ENCODE measurements at regions of chr19 and their contacts with region 1.

Region 1: DNA sequence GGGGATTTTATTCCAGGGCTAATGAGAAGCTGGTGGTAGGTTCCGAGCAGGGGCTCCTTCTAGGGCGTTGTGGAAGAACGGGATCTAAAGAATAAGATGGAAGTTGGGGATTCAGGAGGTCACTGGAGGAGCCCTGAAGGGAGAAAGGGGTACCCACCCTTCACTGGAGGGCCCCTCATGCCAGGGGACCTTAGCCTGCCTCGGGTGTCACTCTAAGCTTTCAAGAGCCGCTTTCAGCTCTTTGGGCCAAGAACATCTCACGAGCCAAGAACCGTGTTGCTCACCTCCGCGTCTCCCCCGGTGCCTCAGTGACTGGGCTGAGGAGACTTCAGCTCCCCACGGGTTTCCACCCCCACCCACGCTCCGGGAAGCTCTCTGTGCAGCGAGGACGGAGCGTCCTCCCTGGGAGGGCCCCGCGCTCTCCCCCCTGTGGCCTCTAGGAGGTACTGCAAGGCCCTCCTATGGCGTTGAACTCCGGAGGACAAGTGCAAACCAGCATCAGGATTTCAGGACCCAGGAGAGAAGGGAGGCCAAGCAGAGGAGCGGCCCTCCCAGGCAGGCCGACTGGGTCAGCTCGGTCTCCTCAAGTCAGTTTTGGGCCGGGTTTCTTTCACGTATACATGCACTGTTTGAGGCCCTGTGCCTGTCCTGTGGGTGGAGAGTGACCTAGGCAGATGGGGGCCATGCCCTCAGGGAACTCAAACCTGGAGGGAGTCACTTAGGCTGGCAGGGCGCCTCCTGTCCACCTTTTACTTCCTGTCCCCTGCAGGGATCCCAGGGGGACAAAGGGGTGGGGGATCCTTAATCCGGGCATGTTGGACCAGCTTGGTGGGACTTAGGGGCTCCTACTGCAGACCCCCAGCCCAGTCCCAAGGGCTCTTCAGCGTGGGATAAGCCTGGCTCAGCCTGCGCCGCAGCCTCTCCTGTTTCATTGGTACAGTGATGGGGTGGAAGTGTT is 5.1 kb upstream of the KRTDAP start:
- DNase-seq: peak; percentile 72
- ATAC-seq: peak; percentile 91
- H3K4me3 Mint-ChIP-seq: no peak overlapping the region
- H3K27ac Mint-ChIP-seq: no peak overlapping the region
- H3K4me1 Mint-ChIP-seq: peaks cover 3% of the 10 kb centered on the region
- H3K27me3 Mint-ChIP-seq: peaks cover 19% of the 10 kb centered on the region

Region 2: DNA sequence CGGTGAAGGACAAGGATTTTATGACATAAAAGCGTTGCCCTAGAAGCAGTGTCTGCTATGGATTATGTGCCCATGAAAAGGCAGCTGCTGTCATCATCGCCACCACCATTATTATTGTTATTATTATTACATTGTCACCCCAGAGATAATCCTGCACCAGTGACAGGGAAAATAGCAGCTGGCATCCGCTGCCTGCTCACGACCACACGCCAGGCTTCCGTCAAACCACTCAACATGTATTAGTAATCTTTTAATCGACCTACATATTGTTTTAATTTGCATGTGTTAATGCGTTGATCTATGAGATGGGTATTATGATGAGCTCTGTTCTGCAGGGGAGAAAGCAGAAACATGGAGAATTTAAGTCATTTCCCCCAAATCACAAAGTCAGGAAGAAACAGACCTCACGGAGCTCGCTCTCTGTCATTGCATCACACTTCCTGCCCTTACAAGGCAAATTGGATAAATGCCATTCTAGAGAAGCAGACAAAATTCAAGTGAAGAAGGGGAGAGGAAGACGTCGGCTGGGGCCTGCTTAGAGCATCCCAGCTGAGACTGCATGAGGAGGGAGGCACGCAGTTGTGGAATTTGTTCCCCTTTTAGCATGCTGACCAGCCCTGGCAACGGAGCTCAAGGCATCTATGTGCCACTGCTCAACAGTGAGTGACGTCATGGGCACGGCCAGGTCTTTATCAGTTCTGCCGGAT is 137.4 kb before region 1 on chr19 and contains the start of gene FFAR3:
- CTCF ChIA-PET with region 1: interaction called, 51 read pairs
- DNase-seq: peak; percentile 22
- ATAC-seq: no peak
- H3K4me3 Mint-ChIP-seq: no peak within 1 kb of the TSS
- H3K27ac Mint-ChIP-seq: no peak within 1 kb of the TSS
- H3K4me1 Mint-ChIP-seq: peaks cover 19% of the 10 kb centered on the region
- H3K27me3 Mint-ChIP-seq: peaks cover 35% of the 10 kb centered on the region
- total RNA-seq, gene FFAR3: not detected

Region 3: DNA sequence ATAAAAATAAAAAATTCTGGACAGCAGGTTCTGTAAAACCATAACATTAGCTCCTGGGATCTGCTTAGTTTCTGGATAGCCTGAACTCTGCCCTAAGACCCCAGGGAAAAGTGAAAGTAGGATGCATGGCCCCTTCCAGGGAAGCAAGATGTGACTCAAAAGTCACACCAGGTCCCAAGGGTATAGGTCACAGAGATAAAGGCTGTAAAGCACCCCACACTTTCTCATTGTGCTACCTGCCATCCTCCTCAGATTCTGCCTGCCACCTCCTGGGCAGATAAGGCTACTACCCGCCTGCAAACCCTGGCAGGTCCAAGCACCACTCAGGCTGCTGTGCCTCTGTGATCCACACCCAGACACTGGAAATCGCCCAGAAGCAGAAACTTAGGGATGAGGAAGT is 26.7 kb before region 1 on chr19:
- CTCF ChIA-PET with region 1: interaction called, 14 read pairs
- DNase-seq: peak; percentile 81
- ATAC-seq: peak; percentile 99
- H3K4me3 Mint-ChIP-seq: no peak overlapping the region
- H3K27ac Mint-ChIP-seq: no peak overlapping the region
- H3K4me1 Mint-ChIP-seq: peaks cover 7% of the 10 kb centered on the region
- H3K27me3 Mint-ChIP-seq: peaks cover 3% of the 10 kb centered on the region

Region 4: GRCh38 chr19:35509861-35510625 is 14.7 kb after region 1 on chr19:
- CTCF ChIA-PET with region 1: interaction called, 34 read pairs
- DNase-seq: peak; percentile 75
- ATAC-seq: peak; percentile 78
- H3K4me3 Mint-ChIP-seq: peak overlapping the region; percentile 22
- H3K27ac Mint-ChIP-seq: no peak overlapping the region
- H3K4me1 Mint-ChIP-seq: peaks cover 14% of the 10 kb centered on the region
- H3K27me3 Mint-ChIP-seq: peaks cover 59% of the 10 kb centered on the region

Region 5: GRCh38 chr19:35565016-35565856 is 69.8 kb after region 1 on chr19:
- CTCF ChIA-PET with region 1: no interaction called
- DNase-seq: no peak
- ATAC-seq: no peak
- H3K4me3 Mint-ChIP-seq: no peak overlapping the region
- H3K27ac Mint-ChIP-seq: no peak overlapping the region
- H3K4me1 Mint-ChIP-seq: no peaks in the 10 kb centered on the region
- H3K27me3 Mint-ChIP-seq: peaks cover 14% of the 10 kb centered on the region

Region 6: GRCh38 chr19:35592226-35592625 is 96.8 kb after region 1 on chr19:
- CTCF ChIA-PET with region 1: no interaction called
- DNase-seq: no peak
- ATAC-seq: no peak
- H3K4me3 Mint-ChIP-seq: no peak overlapping the region
- H3K27ac Mint-ChIP-seq: no peak overlapping the region
- H3K4me1 Mint-ChIP-seq: peaks cover 7% of the 10 kb centered on the region
- H3K27me3 Mint-ChIP-seq: peaks cover 5% of the 10 kb centered on the region